Caco-2 (cell line): ENCODE measurements at regions of chr2 and their contacts with region 1.

Region 1: GRCh38 chr2:21042958-21043743 is 722 bp downstream of the APOB start:
- DNase-seq: peak; percentile 89 to 91
- H3K4me3 ChIP-seq: peak overlapping the region; percentile 82
- H3K4me3 Mint-ChIP-seq: peak overlapping the region; percentile 91
- H3K27ac Mint-ChIP-seq: peak overlapping the region; percentile 89
- H3K4me1 ChIP-seq: peaks cover 18% of the 10 kb centered on the region
- H3K4me1 Mint-ChIP-seq: peaks cover 22% of the 10 kb centered on the region
- H3K27me3 ChIP-seq: no peaks in the 10 kb centered on the region
- H3K27me3 Mint-ChIP-seq: no peaks in the 10 kb centered on the region
- CTCF ChIP-seq: peak; percentile 94 to 95

Region 2: GRCh38 chr2:20728114-20728758 is 314.9 kb before region 1 on chr2:
- CTCF ChIA-PET with region 1: no interaction called
- POLR2A ChIA-PET with region 1: no interaction called
- intact Hi-C with region 1: no loop called
- DNase-seq: peak; percentile 93 to 94
- H3K4me3 ChIP-seq: no peak overlapping the region
- H3K4me3 Mint-ChIP-seq: peak overlapping the region; percentile 63
- H3K27ac Mint-ChIP-seq: peak overlapping the region; percentile 88
- H3K4me1 ChIP-seq: peaks cover 41% of the 10 kb centered on the region
- H3K4me1 Mint-ChIP-seq: peaks cover 18% of the 10 kb centered on the region
- H3K27me3 ChIP-seq: no peaks in the 10 kb centered on the region
- H3K27me3 Mint-ChIP-seq: no peaks in the 10 kb centered on the region
- CTCF ChIP-seq: no peak

Region 3: GRCh38 chr2:20781656-20782265 is 261.4 kb before region 1 on chr2:
- CTCF ChIA-PET with region 1: no interaction called
- POLR2A ChIA-PET with region 1: no interaction called
- intact Hi-C with region 1: loop called (anchors 1 kb)
- DNase-seq: peak in 1 of 2 experiments; percentile 43
- H3K4me3 ChIP-seq: no peak overlapping the region
- H3K4me3 Mint-ChIP-seq: no peak overlapping the region
- H3K27ac Mint-ChIP-seq: no peak overlapping the region
- H3K4me1 ChIP-seq: peaks cover 7% of the 10 kb centered on the region; the same call in 1 of the 2 replicates
- H3K4me1 Mint-ChIP-seq: peaks cover 15% of the 10 kb centered on the region
- H3K27me3 ChIP-seq: no peaks in the 10 kb centered on the region
- H3K27me3 Mint-ChIP-seq: no peaks in the 10 kb centered on the region
- CTCF ChIP-seq: peak; percentile 57 to 75

Region 4: GRCh38 chr2:21070341-21071257 is 27.4 kb after region 1 on chr2:
- CTCF ChIA-PET with region 1: interaction called, 3 read pairs
- POLR2A ChIA-PET with region 1: no interaction called
- intact Hi-C with region 1: loop called (anchors 1 kb)
- DNase-seq: peak in 1 of 2 experiments; percentile 50
- H3K4me3 ChIP-seq: no peak overlapping the region
- H3K4me3 Mint-ChIP-seq: peak overlapping the region; percentile 7
- H3K27ac Mint-ChIP-seq: peak overlapping the region; percentile 32
- H3K4me1 ChIP-seq: peaks cover 20% of the 10 kb centered on the region
- H3K4me1 Mint-ChIP-seq: peaks cover 27% of the 10 kb centered on the region
- H3K27me3 ChIP-seq: no peaks in the 10 kb centered on the region
- H3K27me3 Mint-ChIP-seq: no peaks in the 10 kb centered on the region
- CTCF ChIP-seq: no peak

Region 5: GRCh38 chr2:21146638-21147037 is 103.5 kb after region 1 on chr2:
- CTCF ChIA-PET with region 1: no interaction called
- POLR2A ChIA-PET with region 1: no interaction called
- intact Hi-C with region 1: no loop called
- DNase-seq: no peak
- H3K4me3 ChIP-seq: no peak overlapping the region
- H3K4me3 Mint-ChIP-seq: no peak overlapping the region
- H3K27ac Mint-ChIP-seq: no peak overlapping the region
- H3K4me1 ChIP-seq: no peaks in the 10 kb centered on the region
- H3K4me1 Mint-ChIP-seq: no peaks in the 10 kb centered on the region
- H3K27me3 ChIP-seq: no peaks in the 10 kb centered on the region
- H3K27me3 Mint-ChIP-seq: peaks cover 15% of the 10 kb centered on the region
- CTCF ChIP-seq: no peak

Region 6: DNA sequence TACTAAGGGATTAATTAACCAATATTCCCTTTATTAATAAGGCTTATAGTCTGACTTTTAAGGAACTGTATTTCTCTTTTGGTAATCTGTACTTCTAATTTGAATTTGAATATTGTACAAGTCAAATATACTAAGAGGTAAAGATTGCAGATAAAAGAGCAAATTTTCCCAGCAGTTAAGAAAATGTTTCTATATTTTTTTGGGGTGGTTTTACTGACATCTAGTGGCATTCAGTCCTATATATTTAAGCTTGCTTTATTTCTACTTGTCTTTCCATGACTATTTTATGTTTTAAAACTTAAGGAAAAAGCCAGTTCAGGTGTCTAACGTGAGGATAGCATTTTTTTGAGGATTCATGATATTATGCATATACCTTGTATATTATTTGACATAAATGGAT is 122.2 kb after region 1 on chr2:
- CTCF ChIA-PET with region 1: interaction called, 3 read pairs
- POLR2A ChIA-PET with region 1: no interaction called
- intact Hi-C with region 1: loop called (anchors 1 kb)
- DNase-seq: no peak
- H3K4me3 ChIP-seq: no peak overlapping the region
- H3K4me3 Mint-ChIP-seq: no peak overlapping the region
- H3K27ac Mint-ChIP-seq: no peak overlapping the region
- H3K4me1 ChIP-seq: no peaks in the 10 kb centered on the region
- H3K4me1 Mint-ChIP-seq: no peaks in the 10 kb centered on the region
- H3K27me3 ChIP-seq: no peaks in the 10 kb centered on the region
- H3K27me3 Mint-ChIP-seq: no peaks in the 10 kb centered on the region
- CTCF ChIP-seq: peak; percentile 41 to 50

Region 7: DNA sequence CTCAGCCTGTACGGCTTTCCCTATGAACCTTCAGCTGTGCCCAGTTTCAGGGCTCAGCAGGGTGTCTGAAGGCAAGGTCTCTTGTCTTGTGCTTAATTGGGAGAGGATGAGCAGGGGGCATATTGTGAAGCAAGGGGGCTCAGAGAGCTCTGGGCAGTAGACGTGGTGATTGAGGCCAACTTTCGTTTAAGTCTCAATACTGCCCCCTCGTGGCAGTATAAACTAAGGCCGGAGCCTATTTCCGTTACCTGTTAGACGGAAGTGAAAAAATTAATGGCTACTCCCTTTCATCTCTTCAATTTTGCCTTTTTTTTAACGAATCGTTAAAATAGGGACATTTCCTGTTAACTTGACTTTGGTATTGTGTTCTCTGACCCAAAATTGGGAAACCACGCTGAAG is 274.0 kb after region 1 on chr2:
- CTCF ChIA-PET with region 1: no interaction called
- POLR2A ChIA-PET with region 1: no interaction called
- intact Hi-C with region 1: loop called (anchors 1 kb)
- DNase-seq: peak; percentile 48 to 70
- H3K4me3 ChIP-seq: no peak overlapping the region
- H3K4me3 Mint-ChIP-seq: no peak overlapping the region
- H3K27ac Mint-ChIP-seq: peak overlapping the region; percentile 57
- H3K4me1 ChIP-seq: peaks cover 14% of the 10 kb centered on the region
- H3K4me1 Mint-ChIP-seq: peaks cover 10% of the 10 kb centered on the region
- H3K27me3 ChIP-seq: no peaks in the 10 kb centered on the region
- H3K27me3 Mint-ChIP-seq: no peaks in the 10 kb centered on the region
- CTCF ChIP-seq: peak; percentile 66 to 73